Heart left ventricle (tissue), 16 donors: ENCODE measurements at regions of chr19 and their contacts with region 1.

Region 1: GRCh38 chr19:54168174-54168917 is 4.6 kb downstream of the TMC4 start:
- DNase-seq: peak; percentile 90 to 97 (median 92)
- ATAC-seq: peak; percentile 80 to 91 (median 88)
- H3K4me3 ChIP-seq: no peak overlapping the region
- H3K27ac ChIP-seq: no peak overlapping the region
- H3K4me1 ChIP-seq: peaks cover 0 to 30% (median 4%) of the 10 kb centered on the region in 12 donors
- H3K27me3 ChIP-seq: peaks cover 0 to 21% (median 4%) of the 10 kb centered on the region in 9 donors
- CTCF ChIP-seq: peak; percentile 79 to 95 (median 88)
- POLR2A ChIP-seq: no peak

Region 2: DNA sequence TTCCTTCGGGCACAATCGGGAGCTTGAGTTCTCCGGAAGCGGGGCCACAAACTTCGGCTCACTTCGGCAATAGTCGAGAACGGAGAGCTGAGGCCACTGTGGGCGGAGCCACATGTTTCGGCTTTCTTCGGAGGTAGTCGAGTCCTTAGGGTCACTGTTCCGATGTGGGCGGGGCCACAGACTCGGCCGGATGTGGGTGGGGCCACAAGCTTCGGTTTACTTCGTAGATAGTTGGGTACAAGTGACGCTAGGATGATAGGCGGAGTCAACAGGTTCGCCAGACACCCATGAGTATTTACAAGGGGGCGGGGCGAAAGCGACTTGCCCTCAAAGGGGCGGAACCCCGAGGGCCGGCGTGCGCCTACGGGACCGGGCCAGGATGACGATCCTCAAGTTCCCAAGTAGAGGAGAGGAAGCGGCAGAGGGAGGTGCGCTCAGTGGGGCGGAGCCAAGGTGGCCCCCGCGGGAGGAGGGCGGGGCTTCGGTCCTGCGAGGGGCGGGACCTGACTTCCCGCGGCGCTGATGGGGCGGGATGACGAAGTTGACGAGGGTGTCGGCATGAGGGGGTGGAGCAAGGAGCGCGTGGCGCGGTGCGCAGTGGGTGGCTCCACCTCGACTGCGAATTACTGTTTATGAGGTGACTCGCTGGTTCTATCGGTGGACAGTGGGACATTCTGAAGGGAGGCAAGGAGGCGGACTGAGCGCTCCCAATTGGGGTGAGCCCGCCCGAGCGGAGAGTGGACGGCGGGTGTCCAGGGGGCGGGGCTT is 21.6 kb after region 1 on chr19:
- intact Hi-C with region 1: loop called in 1 of 10 experiments (anchors 2 kb)
- DNase-seq: peak; percentile 100
- ATAC-seq: peak; percentile 79 to 84 (median 82)
- H3K4me3 ChIP-seq: peak overlapping the region; percentile 68 to 92 (median 86)
- H3K27ac ChIP-seq: peak overlapping the region; percentile 88 to 100 (median 98)
- H3K4me1 ChIP-seq: peaks cover 0 to 23% (median 17%) of the 10 kb centered on the region in 12 donors
- H3K27me3 ChIP-seq: no peaks in the 10 kb centered on the region
- CTCF ChIP-seq: no peak
- POLR2A ChIP-seq: peak in 1 of 2 donors; percentile 44

Region 3: DNA sequence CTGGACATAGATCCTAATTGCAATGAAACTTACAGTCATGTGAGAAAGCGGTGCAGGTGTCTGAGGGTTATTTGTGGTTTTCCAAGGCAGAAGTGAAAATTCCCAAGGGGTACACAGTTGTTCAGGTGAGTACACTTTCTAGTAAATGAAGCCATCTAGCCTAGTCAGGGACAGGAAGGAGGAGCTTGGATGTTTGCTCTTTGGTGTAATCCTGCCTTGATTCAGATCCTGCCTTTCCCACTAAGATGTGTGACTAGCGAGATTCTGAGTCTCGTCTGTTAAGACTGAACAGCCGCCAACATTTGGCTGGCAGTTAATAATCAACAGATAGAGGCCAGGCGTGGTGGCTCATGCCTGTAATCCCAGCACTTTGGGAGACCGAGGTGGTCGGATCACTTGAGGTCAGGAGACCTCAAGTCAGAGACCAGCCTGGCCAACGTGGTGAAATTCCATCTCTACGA is 34.8 kb after region 1 on chr19:
- intact Hi-C with region 1: loop called in 1 of 10 experiments (anchors 5 kb)
- DNase-seq: no peak
- ATAC-seq: no peak
- H3K4me3 ChIP-seq: peak overlapping the region in 3 of 12 donors; percentile 11 to 79 (median 20)
- H3K27ac ChIP-seq: peak overlapping the region in 2 of 12 donors; percentile 20 to 91
- H3K4me1 ChIP-seq: peaks cover 19 to 77% (median 52%) of the 10 kb centered on the region in 12 donors
- H3K27me3 ChIP-seq: no peaks in the 10 kb centered on the region
- CTCF ChIP-seq: no peak
- POLR2A ChIP-seq: no peak

Region 4: DNA sequence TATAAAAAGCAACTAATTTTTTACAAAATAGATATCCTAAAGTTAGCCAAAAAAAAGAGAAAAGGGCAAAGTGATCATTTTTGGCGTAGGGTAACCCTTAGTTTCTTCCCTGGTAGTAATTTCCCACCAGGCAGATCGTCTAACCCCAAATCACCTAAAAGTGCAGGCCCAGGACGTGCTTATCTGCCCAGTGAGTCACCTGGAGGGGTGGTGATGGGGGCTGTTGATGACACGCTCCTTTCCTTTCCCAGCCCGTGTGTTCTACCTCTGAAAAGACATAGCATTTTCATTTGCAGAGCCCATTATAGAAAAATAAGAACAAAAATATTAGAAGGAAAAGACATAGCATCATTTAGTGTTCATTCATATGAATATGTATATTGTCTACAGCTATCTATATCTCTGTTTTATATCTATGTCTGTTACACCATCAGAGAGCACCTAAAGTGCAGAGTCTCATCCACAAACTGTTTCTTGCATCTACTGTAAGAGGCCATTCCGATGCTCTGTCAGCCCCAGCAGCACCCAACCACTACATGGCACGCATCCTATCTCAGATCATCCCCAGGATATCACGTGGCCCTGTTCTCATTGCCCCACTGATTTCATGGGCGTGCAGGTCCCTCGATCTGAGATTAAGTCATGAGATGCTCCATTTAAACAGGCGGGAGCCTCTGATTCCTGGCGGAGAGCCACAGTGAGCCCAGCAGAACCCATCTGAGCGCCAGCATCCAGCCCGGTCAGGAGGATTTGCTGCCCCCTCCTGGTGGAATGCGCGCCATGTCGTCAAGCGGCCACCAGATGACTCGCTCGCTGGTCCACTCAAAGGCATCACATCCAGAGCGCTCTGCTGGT is 63.0 kb after region 1 on chr19:
- intact Hi-C with region 1: loop called (anchors 1 to 5 kb)
- DNase-seq: peak; percentile 85 to 90 (median 87)
- ATAC-seq: peak; percentile 89 to 95 (median 94)
- H3K4me3 ChIP-seq: no peak overlapping the region
- H3K27ac ChIP-seq: no peak overlapping the region
- H3K4me1 ChIP-seq: peaks cover 0 to 3% (median 0%) of the 10 kb centered on the region in 12 donors
- H3K27me3 ChIP-seq: peaks cover 0 to 44% (median 0%) of the 10 kb centered on the region in 9 donors
- CTCF ChIP-seq: peak; percentile 84 to 99 (median 90)
- POLR2A ChIP-seq: no peak

Region 5: GRCh38 chr19:54316746-54317107 is 148.4 kb after region 1 on chr19:
- intact Hi-C with region 1: no loop called
- DNase-seq: no peak
- ATAC-seq: peak in 2 of 4 donors; percentile 55 to 56
- H3K4me3 ChIP-seq: no peak overlapping the region
- H3K27ac ChIP-seq: peak overlapping the region in 1 of 12 donors; percentile 20
- H3K4me1 ChIP-seq: peaks cover 0 to 32% (median 0%) of the 10 kb centered on the region in 12 donors
- H3K27me3 ChIP-seq: peaks cover 0 to 35% (median 0%) of the 10 kb centered on the region in 9 donors
- CTCF ChIP-seq: no peak
- POLR2A ChIP-seq: no peak